ENCODE measurements at regions of chr12 and their contacts with region 1.

Region 1: DNA sequence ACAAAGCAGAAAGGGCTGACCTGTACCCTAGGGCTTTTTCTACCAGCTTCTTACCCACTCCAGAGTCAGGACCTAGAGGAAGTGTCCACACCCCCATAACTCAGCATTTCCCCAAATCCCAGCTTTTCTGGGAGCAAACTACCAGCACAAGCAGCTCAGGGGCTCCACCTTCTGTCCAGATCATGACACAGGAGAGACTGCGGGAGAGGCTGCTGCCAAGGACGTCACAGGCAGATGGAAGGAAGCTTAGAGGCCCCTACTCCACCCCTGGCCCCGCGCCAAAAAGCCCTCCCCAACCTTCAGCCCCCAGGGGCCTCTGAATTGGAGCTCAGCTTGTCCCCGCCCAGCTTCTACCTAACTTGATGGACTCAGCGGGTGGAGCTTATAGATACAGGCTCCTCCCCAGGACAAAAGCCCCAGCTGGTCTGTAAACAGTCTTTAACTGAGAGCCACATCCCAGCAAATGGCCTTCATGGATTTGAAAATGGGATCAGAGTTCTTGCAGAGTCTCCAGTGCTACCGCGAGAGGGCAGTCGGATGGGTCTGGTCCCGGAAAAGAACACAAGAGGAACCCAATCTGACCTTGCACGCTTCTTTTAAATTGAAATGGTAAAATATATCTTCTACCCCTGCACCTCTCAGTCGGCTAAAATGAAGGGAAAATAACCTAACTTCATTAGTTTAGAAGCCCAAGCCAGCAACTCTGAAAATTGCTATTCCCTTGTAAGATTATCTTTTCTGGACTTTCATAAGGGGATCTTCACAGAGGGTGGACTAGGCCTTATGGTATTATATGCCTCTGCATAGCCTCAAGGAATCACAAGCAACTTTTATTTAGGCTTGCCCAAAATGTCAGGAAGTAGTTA is 6.8 kb upstream of the BAZ2A start:
- DNase-seq: peak; percentile 99
- H3K4me3 ChIP-seq: peak overlapping the region; percentile 77
- CTCF ChIP-seq: peak; percentile 90

Region 2: GRCh38 chr12:56510786-56511185 is 126.1 kb before region 1 on chr12:
- CTCF ChIA-PET with region 1: interaction called, 94 read pairs
- POLR2A ChIA-PET with region 1: interaction called, 4 read pairs
- DNase-seq: no peak
- H3K4me3 ChIP-seq: no peak overlapping the region
- CTCF ChIP-seq: no peak

Region 3: DNA sequence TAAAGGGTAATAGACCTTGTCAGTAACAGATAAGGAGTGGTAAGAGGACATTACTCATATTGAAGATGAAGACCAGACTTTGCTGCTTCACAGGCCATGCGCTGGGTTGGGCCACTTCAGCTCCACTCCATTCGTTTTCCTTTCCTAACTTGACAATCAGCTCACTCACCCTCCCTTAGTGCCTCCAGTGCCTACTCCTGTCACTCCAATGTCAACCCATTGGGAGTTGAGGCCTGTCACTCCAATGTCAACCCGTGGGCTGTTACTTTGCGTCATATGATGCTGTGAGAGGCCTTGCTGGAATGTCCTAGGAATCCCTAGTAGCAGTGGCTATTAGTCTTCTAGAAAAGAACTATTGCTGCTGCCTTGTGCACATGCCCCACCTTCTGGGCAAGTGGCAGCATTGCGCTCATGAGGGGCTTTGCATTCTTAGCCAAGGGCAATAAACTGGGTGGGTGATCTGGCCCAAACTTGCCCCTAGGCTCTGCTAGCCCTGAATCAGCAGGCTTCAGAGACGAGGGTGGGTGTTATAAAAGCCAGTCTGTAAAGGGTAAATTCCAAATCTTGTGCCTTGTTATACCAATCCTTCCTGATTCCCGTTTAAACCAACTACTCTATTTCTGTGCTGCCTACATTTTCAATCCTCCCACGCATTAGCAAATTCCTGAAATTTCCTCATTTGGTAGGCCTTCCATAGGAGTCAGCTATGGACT is 42.8 kb before region 1 on chr12:
- CTCF ChIA-PET with region 1: interaction called, 42 read pairs
- POLR2A ChIA-PET with region 1: no interaction called
- DNase-seq: peak; percentile 46
- H3K4me3 ChIP-seq: no peak overlapping the region
- CTCF ChIP-seq: peak; percentile 89

Region 4: DNA sequence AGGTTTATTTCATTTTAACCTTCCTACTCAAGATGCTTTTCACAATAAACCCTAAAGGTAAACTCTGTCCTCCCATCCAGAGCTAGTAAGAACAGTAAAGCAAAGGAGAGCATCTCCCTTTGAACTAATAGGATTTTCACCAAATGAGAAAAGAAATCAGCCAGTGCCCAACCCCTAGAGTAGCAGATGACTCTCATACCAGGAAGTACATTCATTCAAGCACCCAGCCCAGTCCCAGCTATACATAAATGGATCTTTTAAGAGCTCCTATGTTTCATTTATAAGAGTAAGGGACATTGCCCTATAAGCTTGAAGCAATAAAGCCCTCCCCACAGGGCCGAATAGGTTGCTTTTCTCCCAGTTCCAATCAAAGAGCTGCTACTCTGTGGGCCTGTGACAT is 14.4 kb before region 1 on chr12:
- CTCF ChIA-PET with region 1: interaction called, 77 read pairs
- POLR2A ChIA-PET with region 1: interaction called, 8 read pairs
- DNase-seq: no peak
- H3K4me3 ChIP-seq: no peak overlapping the region
- CTCF ChIP-seq: no peak

Region 5: GRCh38 chr12:56687223-56688128 is 50.6 kb after region 1 on chr12:
- CTCF ChIA-PET with region 1: interaction called, 26 read pairs
- POLR2A ChIA-PET with region 1: no interaction called
- DNase-seq: no peak
- H3K4me3 ChIP-seq: peak overlapping the region; percentile 95
- CTCF ChIP-seq: no peak